ENCODE measurements at regions of chr17 and their contacts with region 1.

Region 1: DNA sequence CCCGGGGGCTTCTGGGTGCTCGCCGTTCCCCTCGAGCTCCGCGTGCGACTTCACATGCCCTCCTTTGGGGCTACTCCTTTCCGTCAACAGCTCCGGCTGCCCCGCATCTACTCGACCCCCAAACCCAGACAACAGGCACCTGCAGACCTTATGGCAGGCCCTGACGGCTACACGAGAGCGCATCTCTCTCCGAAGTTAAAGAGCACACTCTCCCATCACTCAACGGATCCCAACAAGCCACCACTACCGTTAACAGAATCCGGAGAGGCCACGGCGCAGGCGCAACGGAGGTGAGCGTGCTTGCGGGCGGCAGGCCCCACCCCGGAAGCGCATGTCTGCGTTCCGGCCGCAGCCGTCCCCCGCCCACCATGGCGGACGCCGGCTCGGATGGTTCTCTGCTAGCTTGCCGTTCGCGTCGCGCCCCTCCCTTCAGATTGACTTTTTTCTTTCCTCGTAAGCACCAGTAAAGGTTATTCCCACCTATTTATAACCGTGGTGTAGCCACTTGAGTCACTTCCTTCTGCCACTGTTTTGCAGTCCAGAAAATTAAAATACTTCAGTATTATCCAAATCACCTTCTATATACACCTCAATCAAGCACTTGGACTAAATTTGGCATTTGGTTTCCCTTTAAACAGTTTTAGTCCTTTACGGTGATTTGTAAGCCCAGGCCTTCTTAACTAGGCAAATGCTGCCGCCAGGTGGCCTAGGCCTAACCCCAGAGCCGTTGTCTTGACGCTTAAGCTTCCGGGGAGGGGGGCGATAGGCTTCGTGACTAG is at the start of gene POLG2:
- DNase-seq: peak; percentile 86 to 98 (median 94)
- ATAC-seq: peak; percentile 97
- H3K4me3 ChIP-seq: peak within 1 kb of the TSS; percentile 41 to 75
- H3K27ac ChIP-seq: peak within 1 kb of the TSS; percentile 81 to 88
- H3K4me1 ChIP-seq: peaks cover 21 to 93% of the 10 kb centered on the region in 2 donors
- H3K27me3 ChIP-seq: no peaks in the 10 kb centered on the region
- CTCF ChIP-seq: peak; percentile 32 to 34
- polyA plus RNA-seq, gene POLG2: 44.5 to 60.6 (median 50.8) TPM

Region 2: DNA sequence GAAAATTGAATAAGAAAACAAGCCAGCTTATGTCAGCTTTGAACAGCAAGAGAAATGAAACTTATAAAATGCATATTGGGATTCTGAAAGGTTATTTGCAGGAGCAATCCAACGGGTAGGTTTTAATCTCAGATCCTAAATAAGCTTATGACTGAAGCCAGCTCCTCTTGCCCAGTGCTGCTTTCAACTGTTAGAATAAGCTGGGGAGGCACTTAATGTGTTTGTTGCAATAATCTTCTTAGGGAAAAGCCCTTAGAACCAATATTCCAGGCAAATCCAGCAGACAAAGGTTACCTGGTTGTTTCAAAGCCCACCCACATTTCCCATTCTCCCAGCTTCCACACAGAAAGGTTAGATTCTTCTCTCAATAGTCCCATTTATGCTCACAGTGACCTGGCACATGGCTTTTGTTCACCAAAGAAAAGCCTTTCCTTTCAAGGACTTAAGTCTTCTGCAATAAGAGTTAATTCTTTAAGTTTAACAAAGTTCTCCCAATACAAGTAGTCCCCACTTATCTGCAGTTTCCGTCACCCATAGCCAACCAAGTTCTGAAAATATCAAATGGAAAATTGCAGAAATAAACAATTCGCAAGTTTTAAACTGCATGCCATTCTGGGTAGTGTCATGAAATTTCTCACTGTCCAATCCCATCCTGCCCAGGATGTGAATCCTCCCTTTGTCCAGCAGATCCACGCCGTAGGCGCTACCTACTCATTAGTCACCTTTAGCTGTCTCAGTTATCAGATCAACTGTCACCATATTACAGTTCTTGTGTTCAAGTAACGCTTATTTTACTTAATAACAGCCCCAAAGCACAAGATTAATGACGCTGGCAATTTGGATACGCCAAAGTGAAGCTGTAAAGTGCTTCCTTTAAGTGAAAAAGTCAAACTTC is 239.8 kb before region 1 on chr17:
- intact Hi-C with region 1: no loop called
- DNase-seq: no peak
- ATAC-seq: no peak
- H3K4me3 ChIP-seq: no peak overlapping the region
- H3K27ac ChIP-seq: no peak overlapping the region
- H3K4me1 ChIP-seq: peaks cover 3 to 31% of the 10 kb centered on the region in 2 donors
- H3K27me3 ChIP-seq: no peaks in the 10 kb centered on the region
- CTCF ChIP-seq: no peak

Region 3: GRCh38 chr17:64320613-64321553 is 176.1 kb before region 1 on chr17:
- intact Hi-C with region 1: loop called in 1 of 2 experiments (anchors 10 kb)
- DNase-seq: peak in 2 of 4 donors; percentile 64 to 65
- ATAC-seq: peak; percentile 88
- H3K4me3 ChIP-seq: no peak overlapping the region
- H3K27ac ChIP-seq: peak overlapping the region in 1 of 2 donors; percentile 29
- H3K4me1 ChIP-seq: peaks cover 2 to 86% of the 10 kb centered on the region in 2 donors
- H3K27me3 ChIP-seq: no peaks in the 10 kb centered on the region
- CTCF ChIP-seq: peak; percentile 72 to 77

Region 4: GRCh38 chr17:64599187-64599676 is 102.3 kb after region 1 on chr17:
- intact Hi-C with region 1: no loop called
- DNase-seq: peak in 1 of 4 donors; percentile 53
- ATAC-seq: peak; percentile 54
- H3K4me3 ChIP-seq: no peak overlapping the region
- H3K27ac ChIP-seq: peak overlapping the region in 1 of 2 donors; percentile 48
- H3K4me1 ChIP-seq: peaks cover 0 to 43% of the 10 kb centered on the region in 2 donors
- H3K27me3 ChIP-seq: no peaks in the 10 kb centered on the region
- CTCF ChIP-seq: no peak

Measured in left lung (tissue), 14 donors.